K562 (cell line): ENCODE measurements at regions of chr17 and their contacts with region 1.

Region 1: DNA sequence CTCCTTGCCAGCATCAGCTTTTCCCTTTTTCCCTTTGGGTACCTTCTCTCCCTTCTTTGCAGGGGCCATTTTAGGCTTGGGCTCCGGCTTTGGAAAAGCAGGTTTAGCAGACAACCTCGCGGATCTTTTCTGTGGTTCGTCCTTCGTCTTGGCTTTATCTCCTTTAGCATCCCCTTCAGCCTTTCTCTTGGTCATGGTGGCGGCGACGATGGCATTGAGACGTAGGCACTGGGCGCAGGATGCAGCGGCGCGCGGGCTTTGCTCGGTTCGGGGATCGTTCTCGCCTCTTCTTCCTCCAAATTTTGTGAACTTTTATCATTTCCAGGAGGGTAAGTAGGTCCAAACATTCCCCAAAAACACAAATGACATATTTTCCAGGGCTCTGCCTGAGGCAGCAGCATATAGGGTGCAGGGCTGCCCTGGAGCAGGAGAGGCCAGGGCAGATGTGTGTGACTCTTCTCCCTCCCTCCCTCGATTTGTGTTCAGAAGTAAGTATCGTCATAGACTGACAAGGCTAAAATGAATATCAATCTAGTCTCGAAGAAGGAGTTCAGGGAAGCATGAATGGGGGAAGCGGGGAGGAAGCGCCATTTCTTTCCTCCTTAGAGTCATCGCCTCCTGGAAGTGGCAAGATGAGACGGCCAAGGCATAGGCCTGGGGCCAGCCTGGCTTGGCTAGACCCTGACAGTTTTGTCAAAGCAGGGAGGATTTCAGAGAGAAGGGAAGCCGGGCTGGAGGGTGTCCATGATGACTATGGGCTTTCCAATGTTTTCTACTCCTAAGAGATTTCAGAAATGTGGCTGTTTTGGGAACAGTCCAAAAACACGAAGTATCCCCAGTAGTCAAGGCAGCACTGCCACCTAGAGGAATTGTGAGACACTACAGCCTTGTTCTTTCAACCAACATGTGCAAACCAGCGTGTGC is 13.2 kb downstream of the CHCT1 start:
- DNase-seq: peak; percentile 65 to 87 (median 71)
- ATAC-seq: peak; percentile 84
- H3K4me3 ChIP-seq: no peak overlapping the region
- H3K27ac ChIP-seq: no peak overlapping the region
- H3K4me1 ChIP-seq: peaks cover 3% of the 10 kb centered on the region in 2 experiments; a peak in 3 of 5 replicates
- H3K27me3 ChIP-seq: no peaks in the 10 kb centered on the region
- CTCF ChIP-seq: peak; percentile 84 to 96 (median 87)
- EP300 ChIP-seq: no peak
- POLR2A ChIP-seq: no peak
- RAD21 ChIP-seq: peak; percentile 95 to 98

Region 2: DNA sequence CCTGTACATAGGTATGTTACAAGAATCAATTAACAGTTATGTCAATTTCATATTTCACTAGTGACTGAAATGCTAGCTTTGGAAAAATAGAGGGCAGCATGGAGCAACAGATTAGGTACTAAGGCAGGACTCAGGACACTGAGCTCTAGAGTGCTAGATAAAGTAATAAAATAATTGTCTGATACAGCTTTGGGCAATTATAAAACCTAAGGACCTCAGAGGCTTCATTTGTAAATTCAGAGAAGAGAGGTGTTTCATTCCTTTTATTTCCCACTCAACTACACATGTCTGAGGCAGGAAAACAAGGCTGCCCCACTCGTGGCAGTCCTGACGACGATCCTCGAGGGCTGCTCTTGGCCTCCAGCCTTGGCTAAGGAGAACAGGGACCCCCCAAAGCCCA is 204.3 kb before region 1 on chr17:
- CTCF ChIA-PET with region 1: interaction called, 7 read pairs
- POLR2A ChIA-PET with region 1: no interaction called
- in situ Hi-C with region 1: no loop called
- intact Hi-C with region 1: loop called (anchors 2 kb)
- DNase-seq: peak in 2 of 4 experiments; percentile 11 to 22
- ATAC-seq: peak; percentile 77
- H3K4me3 ChIP-seq: no peak overlapping the region
- H3K27ac ChIP-seq: no peak overlapping the region
- H3K4me1 ChIP-seq: no peaks in the 10 kb centered on the region; a peak in 1 of 5 replicates
- H3K27me3 ChIP-seq: no peaks in the 10 kb centered on the region
- CTCF ChIP-seq: peak in 2 of 3 experiments; percentile 46 to 60; a peak in 4 of 6 replicates
- EP300 ChIP-seq: no peak
- POLR2A ChIP-seq: no peak
- RAD21 ChIP-seq: peak; percentile 19 to 61; a peak in 3 of 4 replicates

Region 3: DNA sequence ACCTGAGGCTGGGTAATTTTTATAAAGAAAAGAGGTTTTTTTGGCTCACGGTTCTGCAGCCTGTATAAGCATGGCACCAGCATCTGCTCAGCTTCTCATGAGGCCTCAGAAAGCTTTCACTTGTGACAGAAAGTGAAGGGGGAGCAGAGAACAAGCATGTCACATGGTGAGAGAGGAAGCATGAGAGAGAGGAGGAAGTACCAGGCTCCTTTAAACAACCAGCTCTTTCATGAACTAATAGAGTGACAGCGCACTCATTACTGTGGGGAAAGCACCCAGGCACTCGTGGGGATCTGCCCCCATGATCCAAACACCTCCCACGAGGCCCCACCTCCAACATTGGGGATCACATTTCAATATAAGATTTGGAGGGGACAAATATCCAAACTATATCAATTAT is 130.4 kb before region 1 on chr17:
- CTCF ChIA-PET with region 1: no interaction called
- POLR2A ChIA-PET with region 1: no interaction called
- in situ Hi-C with region 1: no loop called
- intact Hi-C with region 1: no loop called
- DNase-seq: peak in 1 of 4 experiments; percentile 44
- ATAC-seq: peak; percentile 90
- H3K4me3 ChIP-seq: no peak overlapping the region
- H3K27ac ChIP-seq: peak overlapping the region; percentile 10; the same call in 1 of the 3 replicates
- H3K4me1 ChIP-seq: peaks cover 0 to 3% of the 10 kb centered on the region in 2 experiments; a peak in 1 of 5 replicates
- H3K27me3 ChIP-seq: no peaks in the 10 kb centered on the region
- CTCF ChIP-seq: no peak
- EP300 ChIP-seq: no peak
- POLR2A ChIP-seq: no peak
- RAD21 ChIP-seq: no peak

Region 4: GRCh38 chr17:60315650-60316049 is 119.9 kb before region 1 on chr17:
- CTCF ChIA-PET with region 1: interaction called, 9 read pairs
- POLR2A ChIA-PET with region 1: no interaction called
- in situ Hi-C with region 1: no loop called
- intact Hi-C with region 1: loop called (anchors 2 kb)
- DNase-seq: peak; percentile 25 to 63 (median 39)
- ATAC-seq: peak; percentile 93
- H3K4me3 ChIP-seq: no peak overlapping the region
- H3K27ac ChIP-seq: no peak overlapping the region
- H3K4me1 ChIP-seq: no peaks in the 10 kb centered on the region; a peak in 1 of 5 replicates
- H3K27me3 ChIP-seq: no peaks in the 10 kb centered on the region
- CTCF ChIP-seq: peak; percentile 46 to 53 (median 47)
- EP300 ChIP-seq: no peak
- POLR2A ChIP-seq: no peak
- RAD21 ChIP-seq: peak in 1 of 2 experiments; percentile 53; a peak in 2 of 4 replicates

Region 5: DNA sequence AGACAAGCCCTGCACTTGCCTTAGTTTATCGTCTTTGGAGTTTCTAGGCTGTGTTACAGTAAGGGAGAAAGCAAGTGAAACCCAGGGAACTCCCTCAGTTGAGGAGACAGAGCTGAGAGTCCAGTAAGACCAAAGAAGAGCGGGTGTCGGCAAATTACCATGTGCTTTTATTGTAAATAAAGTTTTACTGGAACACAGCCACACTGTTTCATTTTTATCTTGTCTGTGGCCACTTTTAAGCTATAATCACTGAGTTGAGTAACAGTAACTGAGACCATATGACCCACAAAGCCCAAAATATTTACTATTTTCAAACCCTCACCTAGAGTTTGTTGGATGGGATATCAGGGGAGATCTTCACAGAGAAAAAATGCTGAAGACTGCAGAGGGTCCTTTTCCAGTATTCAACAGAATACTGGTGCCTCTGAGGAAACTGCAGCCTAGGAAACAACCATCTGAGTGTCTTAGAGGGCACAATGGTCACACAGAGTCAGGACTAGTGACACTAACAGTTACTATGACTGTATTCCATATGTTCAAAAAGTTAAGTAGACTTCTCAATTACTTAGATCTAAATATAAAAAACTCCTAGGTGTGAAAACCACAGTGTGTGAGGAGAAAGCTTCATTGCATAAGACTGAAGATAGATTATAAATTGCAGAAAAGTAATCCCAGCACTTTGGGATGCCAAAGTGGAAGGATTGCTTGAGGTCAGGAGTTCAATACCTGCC is 613.0 kb after region 1 on chr17:
- CTCF ChIA-PET with region 1: no interaction called
- POLR2A ChIA-PET with region 1: no interaction called
- in situ Hi-C with region 1: no loop called
- intact Hi-C with region 1: no loop called
- DNase-seq: no peak
- ATAC-seq: no peak
- H3K4me3 ChIP-seq: no peak overlapping the region
- H3K27ac ChIP-seq: no peak overlapping the region
- H3K4me1 ChIP-seq: no peaks in the 10 kb centered on the region
- H3K27me3 ChIP-seq: no peaks in the 10 kb centered on the region
- CTCF ChIP-seq: no peak
- EP300 ChIP-seq: no peak
- POLR2A ChIP-seq: no peak
- RAD21 ChIP-seq: no peak